ENCODE measurements at regions of chr20 and their contacts with region 1.

Region 1: GRCh38 chr20:45373353-45374100 is 4.6 kb downstream of the TP53TG5 start:
- DNase-seq: peak; percentile 89
- H3K4me3 Mint-ChIP-seq: peak overlapping the region; percentile 74
- H3K27ac Mint-ChIP-seq: peak overlapping the region; percentile 83
- H3K4me1 Mint-ChIP-seq: peaks cover 34% of the 10 kb centered on the region
- H3K27me3 Mint-ChIP-seq: no peaks in the 10 kb centered on the region

Region 2: DNA sequence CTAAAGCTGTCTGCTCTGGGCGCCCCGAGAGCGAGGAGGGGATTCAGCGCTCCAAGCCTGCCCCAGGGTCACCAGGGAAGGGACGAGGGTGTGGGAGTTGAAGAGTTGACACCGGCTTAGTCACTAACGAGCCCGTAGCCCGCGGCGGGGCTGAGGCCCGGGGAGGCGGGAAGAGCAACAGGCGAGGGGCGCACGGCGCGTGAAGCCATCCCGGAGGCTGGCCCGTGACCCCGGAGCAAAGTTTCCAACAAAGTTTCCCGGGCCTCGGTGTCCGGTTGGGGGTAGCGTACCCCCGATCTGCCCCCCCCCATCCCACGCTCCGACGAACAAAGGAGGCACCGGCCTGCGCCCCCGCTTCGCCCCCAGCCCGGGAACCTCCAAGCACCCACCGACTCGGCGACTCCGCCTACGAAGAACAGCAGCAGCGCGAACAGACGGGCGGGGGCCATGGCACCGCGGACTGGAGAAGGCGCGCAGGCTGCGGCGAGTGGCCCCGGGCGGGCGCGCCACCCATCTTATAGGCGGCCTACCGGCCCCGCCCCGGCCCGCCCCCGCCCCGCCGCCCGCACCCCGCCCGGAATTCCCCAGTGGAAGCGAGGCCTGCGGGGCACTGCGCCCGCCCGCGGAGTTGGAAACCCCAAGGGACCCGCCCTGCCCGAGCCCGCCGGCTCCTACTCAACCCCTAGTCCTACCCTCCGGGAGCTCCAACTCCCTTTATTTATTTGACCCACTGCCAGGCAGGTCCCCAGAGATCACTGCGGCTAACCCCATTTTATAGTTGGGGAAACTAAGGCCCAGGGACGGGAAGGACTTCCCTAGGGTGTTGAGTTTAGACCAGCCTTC is 25.4 kb before region 1 on chr20 and contains the start of gene SDC4:
- CTCF ChIA-PET with region 1: interaction called, 19 read pairs
- POLR2A ChIA-PET with region 1: interaction called, 12 read pairs
- DNase-seq: peak; percentile 70
- H3K4me3 Mint-ChIP-seq: peak within 1 kb of the TSS; percentile 86
- H3K27ac Mint-ChIP-seq: peak within 1 kb of the TSS; percentile 67
- H3K4me1 Mint-ChIP-seq: peaks cover 48% of the 10 kb centered on the region
- H3K27me3 Mint-ChIP-seq: no peaks in the 10 kb centered on the region
- total RNA-seq, gene SDC4: 28.1 to 28.3 TPM

Region 3: DNA sequence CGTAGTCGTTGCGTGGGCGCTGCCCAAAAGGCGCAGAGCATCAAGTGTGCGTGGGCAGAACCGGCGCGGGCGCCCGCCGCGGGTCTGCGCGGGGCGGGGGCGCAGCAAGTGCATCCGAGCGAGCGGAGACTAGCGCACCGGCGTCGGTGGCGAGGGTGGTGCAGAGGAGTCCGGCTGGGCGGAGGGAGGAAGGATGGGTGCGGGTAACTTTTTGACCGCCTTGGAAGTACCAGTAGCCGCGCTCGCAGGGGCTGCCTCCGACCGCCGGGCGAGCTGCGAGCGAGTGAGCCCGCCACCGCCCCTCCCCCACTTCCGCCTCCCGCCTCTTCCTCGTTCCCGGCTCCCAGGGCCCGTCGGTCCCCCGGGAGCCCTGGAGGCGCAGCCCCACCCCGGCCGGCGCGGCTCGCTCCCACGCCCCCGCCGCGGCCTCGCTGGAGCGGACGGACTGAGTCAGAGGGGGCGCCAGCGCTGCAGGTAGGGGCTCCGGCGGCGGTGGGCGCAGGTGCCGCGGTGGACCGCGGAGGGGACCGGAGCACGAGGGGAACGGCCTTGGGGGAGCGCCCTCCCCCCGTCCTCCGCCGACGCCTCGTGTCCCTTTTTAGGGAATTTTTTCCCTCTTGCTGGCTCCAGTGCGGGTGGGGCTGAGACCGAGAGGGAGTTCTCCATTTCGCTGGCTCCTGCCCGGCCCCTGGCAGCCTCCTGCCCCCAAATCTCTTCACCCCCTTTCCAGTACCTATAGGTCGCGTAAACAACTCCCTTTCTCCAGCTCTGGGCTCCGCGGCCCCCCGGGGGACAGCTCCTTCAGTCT is 32.9 kb after region 1 on chr20:
- CTCF ChIA-PET with region 1: interaction called, 15 read pairs
- POLR2A ChIA-PET with region 1: interaction called, 6 read pairs
- DNase-seq: peak; percentile 45
- H3K4me3 Mint-ChIP-seq: peak overlapping the region; percentile 71
- H3K27ac Mint-ChIP-seq: no peak overlapping the region
- H3K4me1 Mint-ChIP-seq: peaks cover 16% of the 10 kb centered on the region
- H3K27me3 Mint-ChIP-seq: peaks cover 22% of the 10 kb centered on the region

Region 4: GRCh38 chr20:45450097-45450818 is 76.7 kb after region 1 on chr20:
- CTCF ChIA-PET with region 1: interaction called, 33 read pairs
- POLR2A ChIA-PET with region 1: interaction called, 5 read pairs
- DNase-seq: no peak
- H3K4me3 Mint-ChIP-seq: no peak overlapping the region
- H3K27ac Mint-ChIP-seq: no peak overlapping the region
- H3K4me1 Mint-ChIP-seq: peaks cover 10% of the 10 kb centered on the region
- H3K27me3 Mint-ChIP-seq: peaks cover 4% of the 10 kb centered on the region

Region 5: DNA sequence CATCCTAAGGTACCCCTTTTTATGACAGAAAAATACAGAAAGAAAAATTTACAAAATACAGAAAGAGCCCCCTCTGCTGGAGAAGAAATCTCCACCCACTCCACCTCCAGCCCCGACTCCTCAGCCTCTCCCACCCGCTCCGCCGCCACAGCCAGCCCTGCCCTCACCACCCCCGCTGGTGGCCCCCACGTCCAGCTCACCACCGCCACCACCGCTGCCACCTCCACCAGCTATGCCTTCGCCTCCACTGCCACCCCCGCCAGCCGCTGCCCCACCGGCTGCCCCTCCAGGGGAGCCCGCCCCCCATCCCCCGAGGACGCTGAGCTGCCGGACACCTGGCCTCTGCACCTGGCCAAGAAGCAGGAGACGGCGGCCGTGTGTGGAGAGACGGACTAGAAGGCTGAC is 113.7 kb after region 1 on chr20:
- CTCF ChIA-PET with region 1: no interaction called
- POLR2A ChIA-PET with region 1: no interaction called
- DNase-seq: no peak
- H3K4me3 Mint-ChIP-seq: no peak overlapping the region
- H3K27ac Mint-ChIP-seq: no peak overlapping the region
- H3K4me1 Mint-ChIP-seq: no peaks in the 10 kb centered on the region
- H3K27me3 Mint-ChIP-seq: peaks cover 32% of the 10 kb centered on the region

Measured in activated CD4-positive, alpha-beta memory T cell treated with anti-CD3 and anti-CD28 coated beads, Interleukin-2, amount 10 ng/mL, durations not matched to agents 7 days and 5 days (primary cell).